ENCODE measurements at regions of chr6 and their contacts with region 1.

Region 1: DNA sequence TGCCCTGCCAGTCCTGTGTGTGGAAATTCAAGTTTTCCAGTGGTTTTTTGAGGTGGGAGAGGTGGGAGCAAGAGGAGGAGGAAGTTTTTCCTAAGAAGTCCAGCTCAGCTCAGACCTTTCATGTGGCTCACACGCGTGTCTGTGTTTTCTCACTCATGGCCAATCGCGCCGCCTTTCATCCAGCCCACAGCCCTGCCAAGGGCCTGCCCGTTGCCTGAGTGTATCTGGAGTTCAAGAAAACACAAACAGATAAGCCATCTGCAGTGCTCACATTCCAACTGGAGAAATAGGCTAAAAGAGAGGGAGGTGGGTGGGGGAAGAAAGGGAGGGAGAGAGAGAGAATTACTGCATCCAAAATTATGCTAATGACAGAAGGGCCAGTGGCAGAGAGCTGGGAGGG is 12.6 kb upstream of the MPC1 start:
- DNase-seq: no peak
- ATAC-seq: no peak
- H3K4me3 ChIP-seq: no peak overlapping the region
- H3K27ac ChIP-seq: no peak overlapping the region
- H3K4me1 ChIP-seq: peaks cover 7% of the 10 kb centered on the region
- H3K27me3 ChIP-seq: no peaks in the 10 kb centered on the region
- CTCF ChIP-seq: no peak

Region 2: GRCh38 chr6:166318649-166319600 is 76.4 kb before region 1 on chr6:
- intact Hi-C with region 1: loop called in 1 of 2 experiments (anchors 5 kb)
- DNase-seq: no peak
- ATAC-seq: peak in 1 of 4 donors; percentile 27
- H3K4me3 ChIP-seq: no peak overlapping the region
- H3K27ac ChIP-seq: no peak overlapping the region
- H3K4me1 ChIP-seq: no peaks in the 10 kb centered on the region
- H3K27me3 ChIP-seq: no peaks in the 10 kb centered on the region
- CTCF ChIP-seq: no peak

Measured in psoas muscle (tissue), 8 donors.